Activated T-helper 1 cell treated with anti-CD3 and anti-CD28 coated beads, Interleukin-12 subunit alpha, Interleukin-12 subunit beta, Interleukin-2, Interleukin-4 antibody, amounts not matched to agents 30 ng/mL and 10 ng/mL and 1 ng/mL, durations not matched to agents 14 hours and 24 hours and 36 hours (primary cell): ENCODE measurements at regions of chr16 and their contacts with region 1.

Region 1: DNA sequence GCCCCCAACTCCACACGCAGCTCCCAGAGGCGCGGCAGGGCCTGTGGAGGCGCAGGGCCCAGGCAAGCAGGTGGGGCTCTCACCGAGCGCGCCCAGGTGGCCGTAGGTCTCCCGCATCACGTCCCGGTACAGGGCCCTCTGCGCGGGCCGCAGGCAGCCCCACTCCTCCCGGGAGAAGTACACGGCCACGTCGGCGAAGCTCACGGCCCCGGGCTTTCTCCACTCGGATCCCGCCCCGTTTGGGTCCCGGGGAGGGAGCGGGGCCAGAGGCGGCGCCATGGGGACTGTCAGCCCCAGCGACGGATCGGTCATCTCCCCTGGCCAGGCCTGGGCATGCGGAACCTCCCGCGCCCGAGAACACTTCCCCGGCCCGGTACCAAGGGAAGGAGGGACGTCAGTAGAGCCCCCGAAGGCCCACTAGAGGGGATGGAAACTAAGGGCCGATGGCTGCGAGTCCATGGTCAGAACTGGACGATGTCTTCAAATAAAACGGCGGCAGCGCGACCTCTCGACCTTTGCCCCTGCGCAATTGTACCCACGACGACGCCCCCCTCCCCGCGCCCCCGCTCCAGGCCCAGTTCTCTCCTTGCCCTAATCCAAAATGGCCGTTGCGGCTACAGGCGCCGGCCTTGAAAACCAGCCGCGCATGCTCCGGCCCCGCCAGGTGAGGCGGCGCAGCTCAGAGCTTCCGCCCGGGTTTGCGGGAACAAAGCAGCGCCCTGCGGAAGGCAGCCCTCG is at the start of gene ZNF747:
- DNase-seq: peak; percentile 88
- H3K4me3 Mint-ChIP-seq: peak within 1 kb of the TSS; percentile 98
- H3K27ac Mint-ChIP-seq: peak within 1 kb of the TSS; percentile 99
- H3K4me1 Mint-ChIP-seq: peaks cover 39% of the 10 kb centered on the region
- H3K27me3 Mint-ChIP-seq: no peaks in the 10 kb centered on the region
- total RNA-seq, gene ZNF747: 13.8 and 15.8 TPM in 2 replicates

Region 2: DNA sequence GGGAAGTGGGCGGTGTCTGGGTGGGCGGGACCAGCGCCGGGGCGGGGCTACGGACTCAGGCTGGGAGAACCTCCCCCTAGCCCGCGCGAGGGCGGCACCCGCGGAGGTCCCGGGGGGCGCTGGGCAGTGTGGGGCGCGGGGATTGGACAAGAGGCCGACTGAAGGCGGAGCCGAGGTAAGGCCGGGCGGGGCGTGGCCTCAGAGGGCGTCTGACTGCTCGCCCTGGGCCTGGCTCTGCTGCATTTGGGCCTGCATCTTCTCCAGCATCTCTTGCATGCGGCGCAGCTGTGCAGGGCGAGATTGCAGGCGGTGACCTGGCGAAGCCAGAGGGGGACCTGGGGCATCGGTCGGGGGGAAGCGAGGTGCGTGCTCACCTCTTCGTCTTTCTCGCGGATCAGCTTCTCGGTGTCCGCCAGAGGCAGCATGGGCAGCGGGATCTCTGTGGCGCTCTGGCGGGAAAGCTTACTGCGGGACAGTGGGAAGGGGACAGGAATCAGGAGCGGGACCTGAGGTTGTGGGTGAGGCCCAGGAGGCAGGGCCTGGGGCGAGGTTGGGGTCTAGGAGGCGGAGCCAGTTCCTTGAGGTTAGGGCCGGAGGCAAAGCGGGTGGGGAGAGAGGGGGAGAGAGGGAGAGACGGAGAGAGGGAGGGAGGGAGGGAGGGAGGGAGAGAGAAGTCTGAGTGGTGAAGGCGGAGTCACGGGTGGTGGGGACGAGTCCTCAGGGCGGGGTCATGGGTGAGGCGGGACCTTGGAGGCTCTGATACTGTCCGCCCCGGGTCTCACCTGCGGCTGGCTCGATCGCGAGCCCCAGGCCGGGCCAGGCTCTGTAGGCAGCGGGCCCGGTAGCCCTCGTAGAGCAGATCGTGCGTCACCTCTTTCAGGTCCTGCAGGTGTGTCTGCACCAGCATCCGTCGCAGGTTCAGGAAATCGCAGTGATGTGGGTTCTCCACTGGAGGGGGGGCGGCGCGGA is 156.0 kb before region 1 on chr16:
- intact Hi-C with region 1: loop called (anchors 1 kb)
- DNase-seq: peak; percentile 98
- H3K4me3 Mint-ChIP-seq: peak overlapping the region; percentile 97
- H3K27ac Mint-ChIP-seq: peak overlapping the region; percentile 100
- H3K4me1 Mint-ChIP-seq: peaks cover 55% of the 10 kb centered on the region
- H3K27me3 Mint-ChIP-seq: peaks cover 2% of the 10 kb centered on the region

Region 3: DNA sequence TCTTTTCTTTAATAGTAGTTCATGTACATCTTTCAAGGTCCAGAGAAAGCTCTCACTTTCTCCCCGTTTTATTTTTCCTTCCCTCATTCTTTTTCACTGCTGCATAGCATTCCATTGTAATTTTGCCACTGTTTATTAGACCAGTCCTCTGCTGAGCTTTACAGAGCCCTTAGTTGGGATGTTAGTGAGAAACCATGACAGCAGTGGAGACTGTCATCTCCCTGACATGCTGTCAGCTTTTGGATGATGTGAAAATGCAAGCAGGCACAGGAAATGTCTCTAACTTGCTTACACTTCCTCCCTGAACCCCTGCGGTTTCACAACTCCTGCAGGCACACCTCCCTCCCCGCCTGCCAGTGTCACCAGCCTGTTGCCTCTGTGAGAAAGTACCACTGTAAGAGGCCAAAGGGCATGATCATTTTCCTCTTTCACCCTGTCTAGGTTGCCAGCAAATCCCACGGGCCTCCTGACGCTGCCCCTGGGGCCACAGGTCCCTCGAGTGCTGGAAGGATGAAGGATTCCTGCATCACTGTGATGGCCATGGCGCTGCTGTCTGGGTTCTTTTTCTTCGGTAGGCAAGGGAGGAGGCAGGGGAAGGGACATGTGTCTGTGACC is 62.1 kb before region 1 on chr16 and contains the start of gene ITGAL:
- intact Hi-C with region 1: loop called (anchors 2 kb)
- DNase-seq: peak; percentile 81
- H3K4me3 Mint-ChIP-seq: peak within 1 kb of the TSS; percentile 96
- H3K27ac Mint-ChIP-seq: peak within 1 kb of the TSS; percentile 95
- H3K4me1 Mint-ChIP-seq: peaks cover 60% of the 10 kb centered on the region
- H3K27me3 Mint-ChIP-seq: no peaks in the 10 kb centered on the region
- total RNA-seq, gene ITGAL: 259 and 287 TPM in 2 replicates

Region 4: DNA sequence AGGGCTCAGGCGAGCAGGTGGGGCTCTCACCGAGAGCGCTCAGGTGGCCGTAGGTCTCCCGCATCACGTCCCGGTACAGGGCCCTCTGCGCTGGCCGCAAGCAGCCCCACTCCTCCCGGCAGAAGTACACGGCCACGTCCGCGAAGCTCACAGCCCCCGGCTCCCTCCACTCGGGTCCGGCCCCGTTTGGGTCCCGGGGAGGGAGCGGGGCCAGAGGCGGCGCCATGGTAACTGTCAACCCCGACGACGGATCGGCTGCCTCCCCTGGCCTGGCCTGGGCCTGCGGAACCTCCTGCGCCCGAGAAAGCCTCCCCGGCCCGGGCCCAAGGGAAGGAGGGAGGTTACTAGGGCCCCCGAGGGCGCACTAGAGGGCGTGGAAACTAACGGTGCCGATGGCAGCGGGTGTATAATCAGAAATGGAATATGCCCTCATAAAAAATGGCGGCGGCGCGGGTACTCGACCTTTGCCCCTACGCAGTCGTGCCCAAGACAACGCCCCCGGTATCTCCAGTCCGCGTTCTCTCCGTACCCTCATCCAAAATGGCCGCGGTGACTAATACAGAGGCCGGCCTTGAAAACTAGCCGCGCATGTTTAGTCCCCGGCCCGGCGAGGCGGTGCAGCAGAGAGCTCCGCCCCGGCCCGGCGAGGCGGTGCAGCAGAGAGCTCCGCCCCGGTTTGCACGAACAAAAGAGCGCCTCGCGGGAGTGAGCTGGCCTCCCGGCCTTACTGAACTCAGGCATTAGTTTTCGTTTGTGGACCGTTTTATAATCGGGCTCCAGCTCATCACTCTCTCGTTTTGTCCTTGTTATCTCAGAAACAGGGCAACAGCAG is 23.6 kb after region 1 on chr16 and contains the start of gene ZNF764:
- intact Hi-C with region 1: loop called (anchors 1 kb)
- DNase-seq: peak; percentile 97
- H3K4me3 Mint-ChIP-seq: peak within 1 kb of the TSS; percentile 90
- H3K27ac Mint-ChIP-seq: peak within 1 kb of the TSS; percentile 92
- H3K4me1 Mint-ChIP-seq: peaks cover 42% of the 10 kb centered on the region
- H3K27me3 Mint-ChIP-seq: no peaks in the 10 kb centered on the region
- total RNA-seq, gene ZNF764: 17.9 and 21.2 TPM in 2 replicates

Region 5: DNA sequence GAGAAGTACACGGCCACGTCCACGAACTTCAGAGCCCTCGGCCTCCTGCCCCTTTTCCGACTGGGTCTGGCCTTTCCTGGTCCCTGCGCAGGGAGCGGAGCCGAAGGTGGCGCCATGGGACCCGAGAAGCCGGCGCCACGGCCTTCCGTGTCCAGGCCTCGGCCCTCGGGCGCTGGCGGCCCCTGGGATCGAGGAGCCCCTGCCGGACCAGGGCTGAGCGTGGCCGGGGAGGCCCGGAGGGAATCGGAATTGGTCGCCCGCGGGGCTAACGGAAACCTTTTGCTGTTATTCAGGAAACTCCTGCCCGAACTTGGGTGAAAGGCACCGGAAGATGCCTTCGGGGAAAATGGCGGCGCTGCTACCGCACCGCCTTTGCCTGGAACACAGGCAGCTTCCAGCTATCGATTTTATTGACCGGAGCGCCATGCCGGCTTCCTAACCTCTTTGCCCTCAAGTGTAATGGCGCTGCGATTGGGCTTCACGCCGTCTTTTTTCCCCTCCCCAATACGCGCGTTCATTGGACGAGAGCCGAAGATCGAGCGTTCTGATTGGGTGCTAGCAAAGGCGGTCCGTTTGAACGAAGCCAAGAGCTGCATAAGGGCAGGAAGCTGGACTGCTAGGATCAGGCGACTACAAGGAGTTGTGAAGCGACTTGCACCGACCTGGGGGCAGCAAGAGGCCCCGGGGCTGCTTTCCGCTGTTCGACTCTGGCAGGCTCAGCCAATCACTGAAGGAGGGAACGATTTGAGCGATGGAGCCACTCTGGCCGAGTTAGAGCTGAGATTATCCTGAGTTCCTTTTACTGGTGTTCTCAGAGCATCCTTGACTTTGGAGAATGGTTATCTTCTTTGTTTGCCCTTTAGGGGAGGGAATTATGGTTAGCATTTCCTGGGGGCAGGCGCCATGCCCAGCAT is 75.6 kb after region 1 on chr16 and contains the start of gene ZNF689:
- intact Hi-C with region 1: no loop called
- DNase-seq: peak; percentile 95
- H3K4me3 Mint-ChIP-seq: peak within 1 kb of the TSS; percentile 93
- H3K27ac Mint-ChIP-seq: peak within 1 kb of the TSS; percentile 96
- H3K4me1 Mint-ChIP-seq: peaks cover 19% of the 10 kb centered on the region
- H3K27me3 Mint-ChIP-seq: no peaks in the 10 kb centered on the region
- total RNA-seq, gene ZNF689: 14.7 TPM in 2 replicates

Region 6: GRCh38 chr16:30628627-30629540 is 94.3 kb after region 1 on chr16:
- intact Hi-C with region 1: loop called (anchors 1 kb)
- DNase-seq: peak; percentile 77
- H3K4me3 Mint-ChIP-seq: peak overlapping the region; percentile 52
- H3K27ac Mint-ChIP-seq: peak overlapping the region; percentile 71
- H3K4me1 Mint-ChIP-seq: peaks cover 10% of the 10 kb centered on the region
- H3K27me3 Mint-ChIP-seq: no peaks in the 10 kb centered on the region